PC-3 (cell line): ENCODE measurements at regions of chr16 and their contacts with region 1.

Region 1: GRCh38 chr16:20838240-20838639 is 31.9 kb downstream of the REXO5 start:
- DNase-seq: no peak
- ATAC-seq: no peak
- H3K4me3 ChIP-seq: no peak overlapping the region
- H3K27ac ChIP-seq: no peak overlapping the region
- H3K4me1 ChIP-seq: peaks cover 18% of the 10 kb centered on the region
- H3K27me3 ChIP-seq: no peaks in the 10 kb centered on the region
- CTCF ChIP-seq: no peak

Region 2: GRCh38 chr16:20774703-20775362 is 63.4 kb before region 1 on chr16:
- CTCF ChIA-PET with region 1: no interaction called
- POLR2A ChIA-PET with region 1: no interaction called
- intact Hi-C with region 1: no loop called
- DNase-seq: peak; percentile 83
- ATAC-seq: peak; percentile 99
- H3K4me3 ChIP-seq: no peak overlapping the region
- H3K27ac ChIP-seq: no peak overlapping the region
- H3K4me1 ChIP-seq: no peaks in the 10 kb centered on the region
- H3K27me3 ChIP-seq: no peaks in the 10 kb centered on the region
- CTCF ChIP-seq: peak; percentile 80

Region 3: DNA sequence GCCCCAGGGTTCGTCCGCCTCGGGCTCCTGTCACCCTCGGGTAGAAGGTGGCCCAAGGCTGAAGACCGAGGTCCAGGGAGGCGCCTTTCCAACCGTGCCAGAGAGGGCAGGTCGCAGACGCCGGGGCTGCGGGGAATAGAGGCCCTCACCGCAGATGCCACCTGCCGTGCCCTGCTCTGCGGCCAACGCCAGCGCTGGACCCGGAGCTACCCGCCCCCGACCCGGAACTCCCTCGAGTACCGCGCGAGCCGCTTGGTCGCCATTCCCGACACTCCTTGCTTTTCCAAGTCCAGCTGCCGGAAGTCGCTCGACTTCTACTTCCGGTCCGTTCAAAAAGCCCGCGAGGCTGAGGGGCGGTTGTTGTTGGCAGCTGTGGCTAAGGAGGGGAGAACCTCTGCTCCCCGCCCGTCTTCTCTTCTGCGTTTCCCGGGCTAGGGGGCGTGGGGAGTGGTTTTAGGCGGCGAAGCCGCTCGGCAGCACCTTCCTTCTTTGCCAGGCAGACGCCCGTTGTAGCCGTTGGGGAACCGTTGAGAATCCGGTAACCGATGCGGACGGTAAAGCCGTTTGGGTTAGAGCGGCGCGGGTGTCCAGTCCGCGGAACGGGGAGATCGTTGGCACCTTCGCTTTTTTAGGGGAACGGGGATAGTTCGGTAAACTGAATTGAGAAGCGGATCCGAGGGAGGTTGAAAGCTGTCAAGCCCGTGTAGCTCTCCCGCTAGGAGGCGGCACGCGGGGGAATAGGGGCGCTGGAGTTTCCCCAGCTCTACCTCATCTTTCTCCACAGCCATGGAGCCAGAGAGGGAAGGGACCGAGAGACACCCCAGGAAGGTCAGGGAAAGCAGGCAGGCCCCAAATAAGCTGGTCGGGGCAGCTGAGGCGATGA is 31.8 kb before region 1 on chr16 and contains the starts of genes ERI2 and REXO5:
- CTCF ChIA-PET with region 1: no interaction called
- POLR2A ChIA-PET with region 1: no interaction called
- intact Hi-C with region 1: loop called (anchors 2 kb)
- DNase-seq: peak; percentile 88
- ATAC-seq: peak; percentile 80
- H3K4me3 ChIP-seq: peak within 1 kb of the TSS; percentile 81
- H3K27ac ChIP-seq: peak within 1 kb of the TSS; percentile 81
- H3K4me1 ChIP-seq: peaks cover 14% of the 10 kb centered on the region
- H3K27me3 ChIP-seq: no peaks in the 10 kb centered on the region
- CTCF ChIP-seq: peak; percentile 45; the same call in 1 of the 2 replicates
- total RNA-seq, gene ERI2: 13.2 and 15.4 TPM in 2 replicates
- total RNA-seq, gene REXO5: 3.4 and 4.0 TPM in 2 replicates